ENCODE measurements at regions of chr3 and their contacts with region 1.

Region 1: GRCh38 chr3:5122030-5122740 is at the start of gene ARL8B:
- DNase-seq: peak; percentile 96
- ATAC-seq: peak; percentile 84
- H3K4me3 Mint-ChIP-seq: peak within 1 kb of the TSS; percentile 83
- H3K27ac Mint-ChIP-seq: peak within 1 kb of the TSS; percentile 94
- H3K4me1 Mint-ChIP-seq: peaks cover 42% of the 10 kb centered on the region
- H3K27me3 Mint-ChIP-seq: no peaks in the 10 kb centered on the region
- total RNA-seq, gene ARL8B: 44.7 to 45.1 TPM

Region 2: GRCh38 chr3:4303187-4304123 is 818.7 kb before region 1 on chr3 and contains the start of gene SETMAR:
- CTCF ChIA-PET with region 1: no interaction called
- POLR2A ChIA-PET with region 1: no interaction called
- intact Hi-C with region 1: loop called in 1 of 2 experiments (anchors 2 kb)
- DNase-seq: peak; percentile 93
- ATAC-seq: peak; percentile 96
- H3K4me3 Mint-ChIP-seq: peak within 1 kb of the TSS; percentile 79
- H3K27ac Mint-ChIP-seq: peak within 1 kb of the TSS; percentile 96
- H3K4me1 Mint-ChIP-seq: peaks cover 26% of the 10 kb centered on the region
- H3K27me3 Mint-ChIP-seq: no peaks in the 10 kb centered on the region
- total RNA-seq, gene SETMAR: 19.3 to 19.4 TPM

Region 3: GRCh38 chr3:4670352-4670751 is 451.8 kb before region 1 on chr3:
- CTCF ChIA-PET with region 1: no interaction called
- POLR2A ChIA-PET with region 1: no interaction called
- intact Hi-C with region 1: no loop called
- DNase-seq: peak; percentile 22
- ATAC-seq: no peak
- H3K4me3 Mint-ChIP-seq: no peak overlapping the region
- H3K27ac Mint-ChIP-seq: no peak overlapping the region
- H3K4me1 Mint-ChIP-seq: no peaks in the 10 kb centered on the region
- H3K27me3 Mint-ChIP-seq: no peaks in the 10 kb centered on the region

Region 4: GRCh38 chr3:4845882-4846281 is 276.3 kb before region 1 on chr3:
- CTCF ChIA-PET with region 1: no interaction called
- POLR2A ChIA-PET with region 1: interaction called, 4 read pairs
- intact Hi-C with region 1: loop called (anchors 5 kb)
- DNase-seq: no peak
- ATAC-seq: peak; percentile 58
- H3K4me3 Mint-ChIP-seq: peak overlapping the region; percentile 16
- H3K27ac Mint-ChIP-seq: peak overlapping the region; percentile 90
- H3K4me1 Mint-ChIP-seq: peaks cover 94% of the 10 kb centered on the region
- H3K27me3 Mint-ChIP-seq: no peaks in the 10 kb centered on the region

Region 5: DNA sequence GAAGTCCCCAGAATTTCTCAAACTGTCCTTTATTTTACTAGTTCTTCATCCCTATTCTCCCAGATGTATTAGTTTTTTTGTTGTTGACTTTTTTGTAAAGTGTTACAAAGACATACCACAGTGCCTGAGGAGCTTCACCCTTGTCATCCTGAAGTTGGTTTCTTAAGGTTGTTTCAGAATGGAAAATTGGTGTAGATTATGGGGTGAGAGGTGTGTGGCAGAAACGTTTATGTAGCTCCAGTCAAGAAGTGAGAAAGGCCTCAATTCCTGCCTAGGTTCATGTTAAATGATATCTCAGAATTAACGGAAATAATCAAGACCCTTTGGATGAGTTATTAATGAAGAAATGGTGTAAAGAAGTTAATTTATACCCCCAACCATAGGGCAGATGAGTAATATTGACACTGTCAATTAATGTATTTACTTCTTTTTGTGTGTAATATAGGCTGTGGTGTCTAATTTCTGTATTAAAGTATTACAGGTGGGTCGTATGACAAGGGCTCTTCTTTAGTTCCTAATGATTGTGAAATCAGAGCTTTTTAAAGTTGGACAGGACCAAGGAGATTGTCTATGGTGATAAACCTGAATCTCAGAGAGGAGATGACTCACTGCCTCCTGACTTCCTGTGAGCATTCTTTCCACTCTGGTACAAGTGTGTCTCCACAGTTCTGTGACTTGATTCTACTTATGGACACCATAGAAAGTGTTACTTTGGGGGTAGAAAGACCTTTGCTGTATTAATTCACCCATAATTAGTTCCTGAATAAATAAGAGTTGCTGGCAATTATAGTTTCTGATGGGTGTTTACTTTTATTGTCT is 72.4 kb after region 1 on chr3:
- CTCF ChIA-PET with region 1: interaction called, 16 read pairs
- POLR2A ChIA-PET with region 1: interaction called, 46 read pairs
- intact Hi-C with region 1: loop called (anchors 1 kb)
- DNase-seq: peak; percentile 62
- ATAC-seq: peak; percentile 34
- H3K4me3 Mint-ChIP-seq: peak overlapping the region; percentile 68
- H3K27ac Mint-ChIP-seq: peak overlapping the region; percentile 98
- H3K4me1 Mint-ChIP-seq: peaks cover 86% of the 10 kb centered on the region
- H3K27me3 Mint-ChIP-seq: no peaks in the 10 kb centered on the region

Region 6: DNA sequence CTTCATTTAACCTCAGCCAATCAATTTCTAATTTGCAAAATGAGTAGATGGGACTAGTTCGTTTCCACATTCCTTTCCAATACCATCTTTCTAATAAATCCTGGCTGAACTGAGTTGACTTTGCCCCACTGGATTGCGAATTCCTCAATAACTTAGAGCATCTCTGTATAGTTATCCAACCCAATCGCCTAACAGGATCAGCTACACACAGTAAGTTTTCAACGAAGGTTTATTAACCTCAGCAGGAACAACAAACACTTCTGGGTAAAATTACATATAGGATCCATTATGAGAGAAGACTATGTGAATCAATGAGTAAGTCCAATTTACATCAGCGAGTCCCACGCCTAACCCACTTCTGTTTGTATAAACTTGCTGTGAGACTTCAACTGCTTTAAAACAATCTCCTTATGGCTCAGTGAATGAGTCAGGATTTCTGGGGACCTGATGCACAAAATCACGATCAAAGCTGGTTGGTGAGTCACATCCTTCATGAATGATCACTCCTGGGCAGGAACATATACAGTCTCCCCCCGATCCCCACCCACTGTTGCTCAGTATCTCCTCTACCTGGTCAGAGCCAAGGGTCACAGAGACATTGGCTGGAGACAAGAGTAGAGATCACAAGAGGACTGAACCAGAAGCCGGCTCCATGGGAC is 208.1 kb after region 1 on chr3:
- CTCF ChIA-PET with region 1: interaction called, 5 read pairs
- POLR2A ChIA-PET with region 1: interaction called, 5 read pairs
- intact Hi-C with region 1: loop called in 1 of 2 experiments (anchors 5 kb)
- DNase-seq: peak; percentile 71
- ATAC-seq: peak; percentile 88
- H3K4me3 Mint-ChIP-seq: peak overlapping the region; percentile 22
- H3K27ac Mint-ChIP-seq: peak overlapping the region; percentile 77
- H3K4me1 Mint-ChIP-seq: peaks cover 46% of the 10 kb centered on the region
- H3K27me3 Mint-ChIP-seq: peaks cover 5% of the 10 kb centered on the region

Region 7: DNA sequence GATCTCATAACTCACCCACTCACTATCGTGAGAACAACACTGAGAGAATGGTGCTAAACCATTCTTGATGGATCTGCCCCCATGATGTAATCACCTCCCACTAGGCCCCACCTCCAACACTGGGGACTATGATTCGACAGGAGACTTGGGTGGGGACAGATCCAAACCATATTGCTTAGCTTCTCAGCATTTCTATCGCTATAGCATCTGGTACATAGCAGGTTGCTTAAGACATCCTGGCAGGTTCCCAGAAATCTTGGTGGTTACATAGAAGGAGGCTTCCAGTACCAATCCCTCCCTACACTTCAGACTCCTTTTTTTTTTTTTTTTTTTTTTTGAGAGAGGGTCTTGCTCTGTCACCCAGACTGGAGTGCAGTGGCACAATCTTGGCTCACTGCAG is 553.1 kb after region 1 on chr3:
- CTCF ChIA-PET with region 1: no interaction called
- POLR2A ChIA-PET with region 1: no interaction called
- intact Hi-C with region 1: no loop called
- DNase-seq: no peak
- ATAC-seq: no peak
- H3K4me3 Mint-ChIP-seq: no peak overlapping the region
- H3K27ac Mint-ChIP-seq: no peak overlapping the region
- H3K4me1 Mint-ChIP-seq: no peaks in the 10 kb centered on the region
- H3K27me3 Mint-ChIP-seq: peaks cover 2% of the 10 kb centered on the region